Activated CD4-positive, alpha-beta memory T cell treated with anti-CD3 and anti-CD28 coated beads for 36 hours (primary cell): ENCODE measurements at regions of chr2 and their contacts with region 1.

Region 1: DNA sequence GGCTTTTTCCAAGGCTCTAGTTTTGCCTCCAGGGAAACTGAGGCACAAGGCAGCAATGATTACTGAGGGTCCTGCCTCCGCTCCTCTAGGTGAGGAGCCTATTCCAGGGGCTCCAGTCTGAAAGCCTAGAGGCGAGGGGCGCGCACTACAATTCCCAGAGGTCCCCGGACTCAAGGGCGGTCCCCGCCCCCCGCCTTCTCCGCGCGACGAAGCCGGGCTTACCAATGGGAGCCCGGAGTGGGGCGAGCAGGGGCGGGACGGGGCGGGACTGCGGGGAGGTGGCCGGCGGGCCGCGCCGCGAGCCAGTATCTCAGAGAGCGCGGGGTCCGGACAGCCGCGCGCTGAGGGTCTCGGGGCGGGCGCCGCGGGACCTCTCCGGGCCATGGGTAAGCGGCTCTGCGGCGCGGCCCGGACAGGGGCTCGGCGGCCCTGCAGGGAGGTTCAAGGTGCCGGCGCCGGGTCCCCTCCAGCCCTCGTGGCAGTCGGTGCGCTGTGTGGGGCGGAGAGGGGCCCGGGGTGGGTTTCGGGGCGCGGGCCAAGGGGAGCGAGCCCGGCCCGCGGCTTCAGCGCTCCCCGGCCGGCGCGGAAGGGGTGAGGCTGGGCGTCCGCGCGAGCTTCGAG is at the start of gene ARID5A:
- DNase-seq: peak; percentile 95
- H3K4me3 Mint-ChIP-seq: peak within 1 kb of the TSS; percentile 95
- H3K27ac Mint-ChIP-seq: peak within 1 kb of the TSS; percentile 98
- H3K4me1 Mint-ChIP-seq: peaks cover 62% of the 10 kb centered on the region
- H3K27me3 Mint-ChIP-seq: no peaks in the 10 kb centered on the region
- total RNA-seq, gene ARID5A: 260 to 266 TPM

Region 2: GRCh38 chr2:96208143-96209010 is 328.2 kb before region 1 on chr2 and contains the start of gene STARD7:
- CTCF ChIA-PET with region 1: no interaction called
- POLR2A ChIA-PET with region 1: interaction called, 5 read pairs
- intact Hi-C with region 1: loop called (anchors 5 kb)
- DNase-seq: peak; percentile 99
- H3K4me3 Mint-ChIP-seq: peak within 1 kb of the TSS; percentile 98
- H3K27ac Mint-ChIP-seq: peak within 1 kb of the TSS; percentile 92
- H3K4me1 Mint-ChIP-seq: peaks cover 53% of the 10 kb centered on the region
- H3K27me3 Mint-ChIP-seq: no peaks in the 10 kb centered on the region
- total RNA-seq, gene STARD7: 173 to 181 TPM

Region 3: DNA sequence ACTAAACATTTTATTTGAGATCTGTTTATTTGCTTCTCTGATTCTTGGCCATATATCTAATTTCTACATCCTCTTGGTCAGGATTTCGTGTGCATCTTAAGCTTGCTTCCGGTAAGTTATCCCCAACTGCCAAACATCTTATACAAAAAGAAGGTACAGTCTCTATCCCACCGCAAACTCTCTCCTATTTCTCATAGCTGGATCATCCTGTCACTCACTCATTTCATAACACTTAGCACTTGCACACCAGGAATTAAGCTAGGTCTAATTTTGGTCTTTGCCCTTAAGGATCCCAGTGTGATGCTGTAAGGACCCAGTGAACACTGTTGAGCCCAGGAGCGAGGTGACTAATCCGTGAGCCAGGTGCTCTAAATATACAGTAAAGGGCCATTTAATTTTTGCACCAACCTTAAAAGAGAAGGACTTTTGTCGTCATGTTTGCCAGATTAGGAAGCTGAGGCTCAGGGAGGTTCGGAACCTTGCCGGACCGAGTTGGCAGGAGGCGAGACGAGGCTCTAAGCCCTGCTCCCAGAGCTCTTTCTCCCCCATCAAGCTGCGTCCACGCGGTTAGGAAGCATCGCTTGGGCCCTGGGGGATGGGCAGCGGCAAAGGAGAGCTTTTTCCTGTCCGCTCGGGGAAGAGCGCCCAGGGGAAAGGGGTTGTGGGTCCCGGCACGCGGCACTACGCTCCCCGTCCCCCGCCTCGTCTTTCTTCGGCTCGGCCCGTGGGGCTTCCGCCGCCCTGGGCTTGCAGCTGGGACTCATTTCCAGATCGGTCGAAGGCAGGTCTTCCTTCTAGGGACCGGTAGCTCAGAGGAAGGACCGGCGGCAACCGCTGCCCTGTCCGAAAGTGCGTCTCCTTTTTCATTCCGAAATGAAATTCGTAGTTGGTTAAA is 215.6 kb before region 1 on chr2:
- CTCF ChIA-PET with region 1: no interaction called
- POLR2A ChIA-PET with region 1: no interaction called
- intact Hi-C with region 1: loop called (anchors 5 kb)
- DNase-seq: peak; percentile 52
- H3K4me3 Mint-ChIP-seq: peak overlapping the region; percentile 91
- H3K27ac Mint-ChIP-seq: peak overlapping the region; percentile 91
- H3K4me1 Mint-ChIP-seq: peaks cover 59% of the 10 kb centered on the region
- H3K27me3 Mint-ChIP-seq: no peaks in the 10 kb centered on the region

Region 4: GRCh38 chr2:96407041-96407918 is 129.3 kb before region 1 on chr2:
- CTCF ChIA-PET with region 1: interaction called, 24 read pairs
- POLR2A ChIA-PET with region 1: interaction called, 6 read pairs
- intact Hi-C with region 1: no loop called
- DNase-seq: peak; percentile 82
- H3K4me3 Mint-ChIP-seq: peak overlapping the region; percentile 8
- H3K27ac Mint-ChIP-seq: peak overlapping the region; percentile 65
- H3K4me1 Mint-ChIP-seq: peaks cover 20% of the 10 kb centered on the region
- H3K27me3 Mint-ChIP-seq: no peaks in the 10 kb centered on the region

Region 5: DNA sequence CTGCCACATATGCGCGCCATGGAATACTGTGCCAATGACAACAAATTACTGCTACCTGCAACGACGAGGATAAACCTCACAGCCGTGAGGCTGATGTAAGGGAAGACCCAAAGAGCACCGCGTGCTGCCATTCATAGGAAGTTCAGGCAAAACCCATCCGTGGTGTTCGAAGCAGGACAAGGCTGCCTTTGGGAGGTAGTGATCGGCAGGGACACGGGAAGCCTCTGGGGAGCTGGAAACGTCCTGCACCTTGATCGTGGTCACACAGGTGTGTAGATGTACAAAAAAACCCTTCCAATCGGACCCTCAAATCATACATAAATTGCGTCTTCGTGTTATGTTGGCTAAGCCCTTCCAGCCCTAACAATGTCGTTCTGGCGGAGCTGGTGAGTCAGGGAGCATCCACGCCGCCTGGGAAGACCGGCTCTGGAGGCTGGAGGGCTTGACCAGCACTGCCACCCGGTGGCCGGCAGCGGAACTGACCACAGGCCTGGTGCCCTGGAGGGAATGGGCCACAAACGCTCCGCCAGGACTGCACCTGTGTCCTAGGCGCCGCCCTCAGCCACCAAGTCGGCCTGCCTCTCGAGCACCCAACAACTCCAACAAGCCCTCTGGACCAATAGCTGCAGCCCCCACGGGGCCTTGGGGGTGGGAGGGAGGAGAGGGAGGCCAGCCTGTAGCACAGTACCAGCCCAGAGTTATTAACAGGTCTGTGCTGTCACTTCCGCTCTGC is 27.3 kb before region 1 on chr2:
- CTCF ChIA-PET with region 1: interaction called, 10 read pairs
- POLR2A ChIA-PET with region 1: interaction called, 3 read pairs
- intact Hi-C with region 1: no loop called
- DNase-seq: peak; percentile 83
- H3K4me3 Mint-ChIP-seq: no peak overlapping the region
- H3K27ac Mint-ChIP-seq: no peak overlapping the region
- H3K4me1 Mint-ChIP-seq: peaks cover 30% of the 10 kb centered on the region
- H3K27me3 Mint-ChIP-seq: peaks cover 6% of the 10 kb centered on the region

Region 6: GRCh38 chr2:96638144-96639121 is 101.9 kb after region 1 on chr2 and contains the start of gene KANSL3:
- CTCF ChIA-PET with region 1: no interaction called
- POLR2A ChIA-PET with region 1: interaction called, 3 read pairs
- intact Hi-C with region 1: loop called (anchors 5 kb)
- DNase-seq: peak; percentile 93
- H3K4me3 Mint-ChIP-seq: peak within 1 kb of the TSS; percentile 97
- H3K27ac Mint-ChIP-seq: peak within 1 kb of the TSS; percentile 90
- H3K4me1 Mint-ChIP-seq: peaks cover 28% of the 10 kb centered on the region
- H3K27me3 Mint-ChIP-seq: no peaks in the 10 kb centered on the region
- total RNA-seq, gene KANSL3: 33.7 to 39.4 TPM